ENCODE measurements at regions of chr14 and their contacts with region 1.

Region 1: DNA sequence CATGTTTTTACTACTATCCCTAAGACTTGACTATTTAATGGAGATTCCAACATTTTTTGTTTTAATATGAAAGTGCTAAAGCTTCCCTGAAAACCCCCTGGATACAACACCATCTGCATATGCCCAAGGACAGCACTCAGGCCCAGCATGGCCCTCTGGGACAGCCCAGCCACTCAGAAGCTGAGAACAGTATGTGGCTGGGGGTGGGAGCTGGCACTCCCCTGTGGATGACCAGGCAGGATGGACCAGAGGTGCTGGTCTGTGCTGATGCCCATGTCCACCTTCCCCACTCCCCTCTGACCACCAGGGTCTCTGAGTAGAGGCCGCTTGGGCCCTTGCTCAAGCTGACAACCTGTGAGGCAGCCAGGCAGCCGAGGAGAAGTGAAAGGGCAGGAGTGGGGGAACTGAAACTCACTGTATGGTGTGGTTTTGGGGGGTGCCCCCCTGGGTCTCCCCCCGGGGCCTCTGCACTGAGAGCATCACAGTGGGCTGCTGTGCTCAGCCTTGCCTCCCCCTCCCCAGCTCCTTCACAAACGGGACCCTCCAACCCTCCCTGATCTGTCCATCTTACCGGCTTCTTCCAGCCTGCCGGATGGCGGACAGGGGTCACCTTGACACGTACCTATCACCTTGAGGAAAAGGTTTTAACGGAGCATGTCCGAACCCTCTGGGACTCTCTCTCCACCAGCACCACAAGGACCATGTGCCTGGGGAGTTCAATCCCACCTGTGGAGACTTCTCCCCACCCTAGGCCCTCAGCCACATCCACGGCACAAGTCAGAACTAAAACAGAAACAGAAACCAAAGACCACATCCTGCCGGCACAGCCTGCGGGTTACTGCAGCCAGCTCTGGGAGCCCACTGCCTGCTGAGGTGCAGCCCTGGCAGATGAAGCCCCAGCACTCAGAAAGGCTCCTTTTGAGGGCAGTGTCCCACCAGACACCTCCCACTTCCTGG is at the start of gene TMEM229B:
- DNase-seq: peak; percentile 94
- ATAC-seq: peak; percentile 83
- H3K4me3 ChIP-seq: peak within 1 kb of the TSS; percentile 24 to 66 (median 55)
- H3K4me3 Mint-ChIP-seq: peak within 1 kb of the TSS; percentile 84
- H3K27ac ChIP-seq: peak within 1 kb of the TSS; percentile 97 to 98
- H3K27ac Mint-ChIP-seq: peak within 1 kb of the TSS; percentile 96
- H3K4me1 ChIP-seq: peaks cover 70 to 77% of the 10 kb centered on the region in 2 donors
- H3K4me1 Mint-ChIP-seq: peaks cover 83% of the 10 kb centered on the region
- H3K27me3 ChIP-seq: no peaks in the 10 kb centered on the region
- H3K27me3 Mint-ChIP-seq: no peaks in the 10 kb centered on the region
- CTCF ChIP-seq: peak; percentile 25
- total RNA-seq, gene TMEM229B: 4.2 and 6.9 TPM in 2 replicates

Region 2: DNA sequence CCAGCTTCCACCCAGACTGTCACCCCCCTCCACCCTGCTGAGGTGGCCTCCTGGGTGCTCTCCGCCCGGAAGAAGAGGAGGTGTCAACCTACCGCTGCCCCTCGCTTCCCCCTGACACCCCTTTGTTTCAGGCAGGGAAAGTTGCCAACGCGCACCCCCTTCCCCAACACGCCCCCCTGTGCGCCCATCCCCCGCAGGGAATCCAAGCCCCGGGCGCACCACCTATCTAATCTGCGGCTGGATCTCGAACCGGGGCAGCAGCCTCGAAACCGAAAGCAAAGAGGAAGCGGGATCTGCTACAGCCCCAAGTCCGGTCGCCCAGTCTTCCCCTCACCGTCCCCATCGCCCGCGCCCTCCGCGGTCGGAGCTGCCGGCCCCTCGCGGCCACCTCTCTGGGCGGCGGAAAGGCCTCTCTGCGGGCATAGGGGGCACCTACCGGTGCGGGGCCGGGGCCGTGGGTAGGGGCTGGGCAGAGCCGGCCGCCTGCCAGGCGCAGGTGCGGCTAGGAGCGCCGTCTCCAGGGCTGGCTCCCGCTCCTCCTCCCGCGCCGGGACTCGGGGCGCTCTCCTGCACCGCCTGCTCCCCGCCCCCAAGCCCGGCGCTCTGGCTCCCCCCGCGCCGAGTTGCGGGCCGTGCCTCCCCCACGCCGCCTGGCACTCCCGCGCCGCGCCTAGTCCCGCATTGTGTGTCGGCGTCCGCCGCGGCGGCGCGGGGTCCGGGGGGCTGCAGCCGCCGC is 26.6 kb after region 1 on chr14:
- CTCF ChIA-PET with region 1: interaction called, 8 read pairs
- POLR2A ChIA-PET with region 1: interaction called, 18 read pairs
- intact Hi-C with region 1: loop called (anchors 1 kb)
- DNase-seq: peak; percentile 66
- ATAC-seq: peak; percentile 50
- H3K4me3 ChIP-seq: peak overlapping the region; percentile 15 to 89 (median 80)
- H3K4me3 Mint-ChIP-seq: peak overlapping the region; percentile 93
- H3K27ac ChIP-seq: peak overlapping the region; percentile 65 to 73
- H3K27ac Mint-ChIP-seq: peak overlapping the region; percentile 93
- H3K4me1 ChIP-seq: peaks cover 37 to 38% of the 10 kb centered on the region in 2 donors
- H3K4me1 Mint-ChIP-seq: peaks cover 40% of the 10 kb centered on the region
- H3K27me3 ChIP-seq: no peaks in the 10 kb centered on the region
- H3K27me3 Mint-ChIP-seq: no peaks in the 10 kb centered on the region
- CTCF ChIP-seq: no peak

Region 3: GRCh38 chr14:67532998-67533753 is 45.0 kb after region 1 on chr14 and contains the start of gene PLEKHH1:
- CTCF ChIA-PET with region 1: interaction called, 28 read pairs
- POLR2A ChIA-PET with region 1: no interaction called
- intact Hi-C with region 1: loop called (anchors 1 kb)
- DNase-seq: peak; percentile 51
- ATAC-seq: peak; percentile 71
- H3K4me3 ChIP-seq: peak within 1 kb of the TSS in 4 of 5 experiments; percentile 22 to 66 (median 54)
- H3K4me3 Mint-ChIP-seq: peak within 1 kb of the TSS; percentile 76
- H3K27ac ChIP-seq: no peak within 1 kb of the TSS
- H3K27ac Mint-ChIP-seq: no peak within 1 kb of the TSS
- H3K4me1 ChIP-seq: peaks cover 18 to 20% of the 10 kb centered on the region in 2 donors
- H3K4me1 Mint-ChIP-seq: peaks cover 5% of the 10 kb centered on the region
- H3K27me3 ChIP-seq: peaks cover 0 to 47% (median 18%) of the 10 kb centered on the region in 4 experiments
- H3K27me3 Mint-ChIP-seq: peaks cover 46% of the 10 kb centered on the region
- CTCF ChIP-seq: no peak
- total RNA-seq, gene PLEKHH1: 0.15 and 0.17 TPM in 2 replicates

Region 4: DNA sequence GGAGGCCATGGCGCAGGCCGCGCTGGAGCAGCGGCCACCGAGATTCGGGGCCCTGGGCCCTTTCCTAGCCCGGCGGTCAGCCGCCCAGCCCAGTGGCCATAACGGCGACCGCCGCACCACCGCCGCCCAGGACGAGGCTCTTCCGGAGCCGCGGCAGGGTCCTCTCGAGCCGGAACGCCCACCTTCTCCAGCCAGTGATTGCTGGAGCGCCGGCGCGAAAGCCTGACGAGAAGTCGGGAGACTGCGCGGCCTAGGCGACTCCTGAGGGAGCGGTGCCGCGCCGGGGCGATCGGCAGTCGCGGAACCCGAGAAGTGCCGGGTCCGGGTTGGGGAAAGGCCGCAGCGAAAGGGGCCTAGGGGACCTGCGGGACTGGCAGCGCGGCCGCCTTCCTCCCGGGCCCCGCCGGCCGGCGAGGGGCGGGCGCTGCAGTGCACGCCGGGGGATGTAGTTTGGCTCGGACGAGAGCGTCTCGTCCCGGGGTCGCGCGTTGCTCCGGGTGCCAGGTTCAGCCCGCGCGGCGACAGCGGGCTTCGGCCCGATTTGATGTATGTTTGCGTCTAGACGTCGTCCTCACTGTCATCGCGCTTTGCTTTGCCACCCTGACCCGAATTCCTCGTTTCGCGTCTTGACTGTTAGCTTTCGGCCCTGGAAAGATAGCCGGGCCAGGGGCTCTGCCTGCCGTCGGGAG is 186.4 kb after region 1 on chr14 and contains the start of gene VTI1B:
- CTCF ChIA-PET with region 1: no interaction called
- POLR2A ChIA-PET with region 1: no interaction called
- intact Hi-C with region 1: loop called (anchors 2 kb)
- DNase-seq: peak; percentile 94
- ATAC-seq: peak; percentile 92
- H3K4me3 ChIP-seq: peak within 1 kb of the TSS; percentile 71 to 97 (median 87)
- H3K4me3 Mint-ChIP-seq: peak within 1 kb of the TSS; percentile 86
- H3K27ac ChIP-seq: peak within 1 kb of the TSS; percentile 96 to 99
- H3K27ac Mint-ChIP-seq: peak within 1 kb of the TSS; percentile 95
- H3K4me1 ChIP-seq: peaks cover 19 to 22% of the 10 kb centered on the region in 2 donors
- H3K4me1 Mint-ChIP-seq: peaks cover 30% of the 10 kb centered on the region
- H3K27me3 ChIP-seq: no peaks in the 10 kb centered on the region
- H3K27me3 Mint-ChIP-seq: no peaks in the 10 kb centered on the region
- CTCF ChIP-seq: no peak
- total RNA-seq, gene VTI1B: 58.8 and 58.9 TPM in 2 replicates